ENCODE measurements at regions of chr19 and their contacts with region 1.

Region 1: GRCh38 chr19:57682226-57682766 is 519 bp downstream of the ZNF551 start:
- DNase-seq: no peak

Region 2: DNA sequence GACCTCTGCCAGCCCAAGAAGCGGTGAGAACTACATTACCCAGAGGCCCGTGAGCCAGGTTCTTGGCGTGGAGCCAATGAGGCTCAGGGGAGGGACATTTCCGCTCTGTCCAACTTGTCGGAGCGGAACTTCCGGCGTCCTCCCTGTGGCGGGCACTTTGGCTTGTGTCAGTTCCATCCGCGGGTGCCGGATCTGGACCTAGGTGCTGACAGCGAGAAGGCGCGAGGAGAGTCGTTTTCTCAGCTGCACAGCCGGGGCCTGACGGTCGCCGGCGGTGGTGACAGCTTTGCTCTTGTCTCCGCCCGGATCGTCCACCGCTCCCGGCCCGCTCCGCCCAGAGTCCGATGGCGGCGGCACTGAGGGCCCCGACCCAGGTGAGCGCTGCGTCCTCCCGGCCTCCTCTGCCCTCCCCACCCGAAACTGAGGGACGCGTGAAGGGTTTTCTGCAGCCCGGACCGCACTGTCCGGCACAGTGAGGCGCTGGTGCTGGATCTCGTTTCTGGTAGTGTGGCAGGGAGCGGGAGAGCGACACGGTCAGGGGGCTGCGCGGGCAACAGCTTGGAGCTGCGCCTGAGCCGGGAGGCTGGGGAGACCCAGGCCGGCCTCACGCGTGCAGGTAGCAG is 82.4 kb before region 1 on chr19 and contains the start of gene ZNF530:
- intact Hi-C with region 1: loop called (anchors 10 kb)
- DNase-seq: peak; percentile 90 to 98 (median 95)